Calu3 (cell line): ENCODE measurements at regions of chr15 and their contacts with region 1.

Region 1: DNA sequence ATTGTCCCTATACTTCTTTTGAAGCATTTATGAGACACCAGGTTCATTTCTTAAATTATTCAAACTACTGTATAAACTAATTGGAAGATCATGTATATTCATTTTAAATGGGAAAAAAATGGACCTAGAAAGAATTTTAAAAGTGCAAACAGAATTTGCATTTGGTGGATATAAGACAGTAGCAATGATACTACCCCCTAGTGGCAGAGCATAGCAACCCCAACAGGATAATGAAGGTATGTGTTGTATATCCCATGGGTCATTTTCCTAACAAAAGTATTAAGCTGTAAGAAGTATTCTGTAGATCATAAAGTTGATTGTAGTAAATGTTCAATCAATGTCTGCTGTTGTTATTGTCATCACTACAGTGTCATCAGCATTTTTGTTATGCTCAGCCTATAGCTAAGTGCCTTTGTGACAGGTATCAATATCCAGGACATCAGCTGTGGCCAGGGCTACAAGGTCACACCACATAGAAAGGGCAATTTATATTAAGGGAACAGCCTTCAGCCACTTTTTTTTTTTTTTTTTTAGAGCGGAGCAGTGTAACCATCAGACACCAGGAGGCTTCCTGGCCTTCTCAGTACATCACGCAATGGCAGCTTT is 175.8 kb downstream of the FOXB1 start:
- DNase-seq: peak; percentile 58
- H3K4me3 Mint-ChIP-seq: no peak overlapping the region
- H3K27ac Mint-ChIP-seq: no peak overlapping the region
- H3K4me1 Mint-ChIP-seq: peaks cover 7% of the 10 kb centered on the region
- H3K27me3 Mint-ChIP-seq: peaks cover 61% of the 10 kb centered on the region
- CTCF ChIP-seq: peak; percentile 66

Region 2: DNA sequence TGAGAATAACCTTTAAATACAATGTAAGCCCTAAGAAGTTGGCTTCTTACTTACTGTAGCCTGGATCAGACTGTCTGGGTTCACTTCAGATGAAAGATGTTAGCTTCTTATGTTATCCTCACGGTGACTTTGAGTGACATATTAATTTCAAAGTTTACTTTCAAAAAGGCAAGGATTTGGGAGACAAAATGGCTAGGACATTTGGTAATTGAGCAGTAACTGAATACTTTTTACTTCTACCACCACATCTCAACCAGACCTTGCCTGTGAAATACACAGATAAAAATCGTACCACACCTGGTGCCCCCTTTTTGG is 454.8 kb before region 1 on chr15:
- CTCF ChIA-PET with region 1: interaction called, 9 read pairs
- intact Hi-C with region 1: loop called (anchors 2 kb)
- DNase-seq: no peak
- H3K4me3 Mint-ChIP-seq: no peak overlapping the region
- H3K27ac Mint-ChIP-seq: no peak overlapping the region
- H3K4me1 Mint-ChIP-seq: no peaks in the 10 kb centered on the region
- H3K27me3 Mint-ChIP-seq: peaks cover 34% of the 10 kb centered on the region
- CTCF ChIP-seq: peak; percentile 1

Region 3: DNA sequence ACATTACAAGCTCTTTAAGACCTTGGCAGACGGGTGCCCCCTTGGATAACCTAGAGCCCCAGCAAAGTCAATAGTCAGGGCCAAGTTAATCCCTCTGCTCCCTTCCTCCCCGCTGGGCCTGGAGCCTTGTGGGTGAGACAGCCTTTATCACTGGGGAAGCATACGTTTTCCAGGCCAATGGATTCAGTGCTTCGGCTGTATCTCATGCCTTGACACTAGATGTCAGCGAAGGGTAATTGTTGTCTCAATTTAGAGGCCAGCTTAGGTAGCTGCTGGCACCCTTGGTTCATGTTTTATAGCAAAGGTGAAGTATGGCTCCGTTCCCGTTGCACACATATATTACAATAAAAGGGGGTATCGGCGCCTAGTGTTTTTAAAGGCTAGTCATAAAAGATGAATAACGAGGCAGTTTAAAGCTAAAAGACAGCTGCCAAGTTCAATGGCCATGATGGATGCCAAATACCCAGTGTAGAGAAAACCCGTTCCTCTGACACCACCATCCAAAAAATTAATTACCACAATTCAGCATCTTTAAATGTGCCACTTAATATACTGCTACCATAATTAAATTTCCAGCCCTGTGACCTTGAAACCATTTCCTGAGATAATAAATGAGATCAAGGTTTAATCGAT is 438.5 kb before region 1 on chr15:
- CTCF ChIA-PET with region 1: interaction called, 17 read pairs
- intact Hi-C with region 1: no loop called
- DNase-seq: peak; percentile 23
- H3K4me3 Mint-ChIP-seq: no peak overlapping the region
- H3K27ac Mint-ChIP-seq: no peak overlapping the region
- H3K4me1 Mint-ChIP-seq: peaks cover 7% of the 10 kb centered on the region
- H3K27me3 Mint-ChIP-seq: peaks cover 86% of the 10 kb centered on the region
- CTCF ChIP-seq: no peak

Region 4: GRCh38 chr15:59825913-59826312 is 354.0 kb before region 1 on chr15:
- CTCF ChIA-PET with region 1: no interaction called
- intact Hi-C with region 1: loop called (anchors 10 kb)
- DNase-seq: no peak
- H3K4me3 Mint-ChIP-seq: no peak overlapping the region
- H3K27ac Mint-ChIP-seq: no peak overlapping the region
- H3K4me1 Mint-ChIP-seq: no peaks in the 10 kb centered on the region
- H3K27me3 Mint-ChIP-seq: peaks cover 27% of the 10 kb centered on the region
- CTCF ChIP-seq: no peak

Region 5: DNA sequence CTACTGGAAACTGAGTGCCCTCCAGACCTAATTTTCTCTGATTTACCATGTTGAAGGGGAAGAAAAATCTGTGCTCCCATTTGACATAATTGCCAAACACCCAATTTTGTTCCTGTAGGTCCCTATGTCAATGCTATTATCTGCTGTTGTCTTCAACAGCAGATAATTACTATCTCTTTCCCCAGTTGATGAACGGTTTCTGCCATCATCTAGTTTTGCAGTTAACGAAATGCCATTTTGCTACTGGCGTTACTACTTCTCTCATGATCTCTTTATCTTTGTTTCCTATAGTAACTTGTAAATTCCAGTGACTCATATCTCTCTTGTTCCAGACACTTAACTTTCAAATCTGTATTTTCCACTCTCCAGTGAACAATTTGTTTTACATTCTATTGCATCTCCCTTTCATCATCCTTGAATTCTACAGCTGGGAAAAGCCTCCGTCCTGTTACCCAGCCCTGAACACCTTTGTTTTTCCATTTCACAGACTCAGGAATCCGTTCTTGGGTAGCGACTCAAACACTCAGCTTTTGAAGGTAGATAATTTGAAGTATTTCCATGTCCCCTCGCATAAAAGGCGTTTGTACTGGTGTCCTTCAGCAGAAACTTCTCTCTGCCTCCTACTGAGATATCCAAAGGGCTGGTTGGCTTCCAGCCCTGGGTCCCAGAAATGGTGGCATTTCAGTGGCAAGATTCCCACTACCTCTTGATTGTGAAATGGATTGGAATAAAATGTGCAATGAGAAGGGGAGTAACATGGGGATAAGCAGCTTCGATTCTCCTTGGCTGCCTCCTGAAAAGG is 64.1 kb before region 1 on chr15:
- CTCF ChIA-PET with region 1: no interaction called
- intact Hi-C with region 1: no loop called
- DNase-seq: no peak
- H3K4me3 Mint-ChIP-seq: no peak overlapping the region
- H3K27ac Mint-ChIP-seq: peak overlapping the region; percentile 18
- H3K4me1 Mint-ChIP-seq: peaks cover 11% of the 10 kb centered on the region
- H3K27me3 Mint-ChIP-seq: peaks cover 8% of the 10 kb centered on the region
- CTCF ChIP-seq: no peak

Region 6: DNA sequence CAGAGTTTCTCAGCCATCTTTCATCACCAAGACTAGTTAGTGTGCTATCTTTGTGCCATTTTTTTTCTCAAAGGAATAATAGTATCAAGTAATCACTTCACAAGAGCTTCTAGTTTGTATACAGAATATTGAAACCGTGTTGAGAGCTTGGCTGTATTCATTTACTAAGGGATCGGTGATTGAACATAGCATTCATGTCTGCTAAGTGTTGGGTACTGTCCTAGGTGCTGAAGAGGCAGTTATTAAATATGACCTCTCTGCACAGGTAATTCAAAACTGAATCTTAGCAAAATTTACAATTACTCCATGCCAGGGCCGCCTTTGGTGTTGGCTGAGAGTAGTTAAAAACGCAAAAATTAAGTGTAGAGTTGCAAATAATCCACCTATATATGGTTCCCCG is 1404.5 kb after region 1 on chr15:
- CTCF ChIA-PET with region 1: no interaction called
- intact Hi-C with region 1: no loop called
- DNase-seq: no peak
- H3K4me3 Mint-ChIP-seq: no peak overlapping the region
- H3K27ac Mint-ChIP-seq: no peak overlapping the region
- H3K4me1 Mint-ChIP-seq: no peaks in the 10 kb centered on the region
- H3K27me3 Mint-ChIP-seq: peaks cover 32% of the 10 kb centered on the region
- CTCF ChIP-seq: no peak